G401 (cell line): ENCODE measurements at regions of chr12 and their contacts with region 1.

Region 1: GRCh38 chr12:38838056-38838850 is 67.1 kb downstream of the CPNE8 start:
- DNase-seq: no peak

Region 2: DNA sequence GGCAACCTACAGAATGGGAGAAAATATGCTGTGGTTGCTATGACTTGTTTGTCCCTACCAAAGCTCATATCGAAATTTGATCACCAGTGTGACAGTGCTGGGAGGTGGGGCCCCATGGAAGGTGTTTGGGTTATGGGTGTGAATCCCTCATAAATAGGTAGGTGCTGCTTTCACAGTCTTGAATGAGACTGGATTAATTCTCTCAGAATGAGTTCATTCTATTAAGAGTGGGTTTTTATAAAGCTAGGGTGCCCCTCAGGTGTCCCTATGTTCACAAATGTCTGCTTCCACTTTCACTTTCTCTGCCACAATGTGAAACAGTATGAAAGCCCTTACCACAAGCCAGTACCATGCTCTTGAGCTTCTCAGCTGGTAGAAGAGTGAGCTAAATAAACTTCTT is 66.4 kb before region 1 on chr12:
- in situ Hi-C with region 1: loop called (anchors 10 kb)
- DNase-seq: no peak